GM12878 (cell line): ENCODE measurements at regions of chr19 and their contacts with region 1.

Region 1: GRCh38 chr19:18179957-18180356 is 6.3 kb downstream of the IFI30 start:
- DNase-seq: no peak
- ATAC-seq: peak; percentile 6; the same call in 2 of the 3 replicates
- H3K4me3 ChIP-seq: no peak overlapping the region
- H3K27ac ChIP-seq: no peak overlapping the region
- H3K4me1 ChIP-seq: peaks cover 14% of the 10 kb centered on the region
- H3K27me3 ChIP-seq: no peaks in the 10 kb centered on the region
- CTCF ChIP-seq: no peak
- EP300 ChIP-seq: no peak
- POLR2A ChIP-seq: no peak
- RAD21 ChIP-seq: no peak

Region 2: GRCh38 chr19:18041054-18041453 is 138.9 kb before region 1 on chr19:
- CTCF ChIA-PET with region 1: no interaction called
- POLR2A ChIA-PET with region 1: no interaction called
- RAD21 ChIA-PET with region 1: no interaction called
- SMC1A ChIA-PET with region 1: no interaction called
- in situ Hi-C with region 1: no loop called
- intact Hi-C with region 1: no loop called
- DNase-seq: no peak
- ATAC-seq: no peak
- H3K4me3 ChIP-seq: no peak overlapping the region
- H3K27ac ChIP-seq: no peak overlapping the region
- H3K4me1 ChIP-seq: peaks cover 15% of the 10 kb centered on the region
- H3K27me3 ChIP-seq: peaks cover 0 to 3% of the 10 kb centered on the region in 2 experiments; a peak in 2 of 4 replicates
- CTCF ChIP-seq: no peak
- EP300 ChIP-seq: no peak
- POLR2A ChIP-seq: no peak
- RAD21 ChIP-seq: no peak

Region 3: DNA sequence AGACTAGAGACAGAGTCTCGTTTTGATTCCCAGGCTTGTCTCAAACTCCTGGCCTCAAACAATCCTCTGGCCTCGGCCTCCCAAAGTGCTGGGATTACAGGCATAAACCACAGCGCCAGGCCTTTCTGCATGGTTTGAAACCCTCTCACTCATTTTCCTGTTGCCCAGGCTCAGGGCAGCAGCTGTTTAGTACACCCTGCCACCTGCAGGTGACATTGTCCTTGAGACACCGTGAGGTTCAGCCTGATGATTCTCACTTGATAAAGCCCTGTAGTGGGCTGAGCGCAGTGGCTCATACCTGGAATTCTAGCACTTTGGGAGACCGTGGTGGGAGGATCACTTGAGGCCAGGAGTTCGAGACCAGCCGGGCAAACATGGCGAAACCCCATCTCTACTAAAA is 105.8 kb before region 1 on chr19:
- CTCF ChIA-PET with region 1: no interaction called
- POLR2A ChIA-PET with region 1: no interaction called
- RAD21 ChIA-PET with region 1: no interaction called
- SMC1A ChIA-PET with region 1: no interaction called
- in situ Hi-C with region 1: no loop called
- intact Hi-C with region 1: no loop called
- DNase-seq: no peak
- ATAC-seq: no peak
- H3K4me3 ChIP-seq: no peak overlapping the region
- H3K27ac ChIP-seq: no peak overlapping the region
- H3K4me1 ChIP-seq: no peaks in the 10 kb centered on the region
- H3K27me3 ChIP-seq: no peaks in the 10 kb centered on the region
- CTCF ChIP-seq: no peak; a peak in 2 of 6 replicates
- EP300 ChIP-seq: no peak
- POLR2A ChIP-seq: no peak
- RAD21 ChIP-seq: no peak

Region 4: GRCh38 chr19:18192673-18193387 is 12.9 kb after region 1 on chr19 and contains the start of gene MPV17L2:
- CTCF ChIA-PET with region 1: interaction called, 22 read pairs
- POLR2A ChIA-PET with region 1: interaction called, 31 read pairs
- RAD21 ChIA-PET with region 1: interaction called, 22 read pairs
- SMC1A ChIA-PET with region 1: interaction called, 21 read pairs
- in situ Hi-C with region 1: no loop called
- intact Hi-C with region 1: no loop called
- DNase-seq: peak; percentile 100
- ATAC-seq: peak; percentile 94
- H3K4me3 ChIP-seq: peak within 1 kb of the TSS; percentile 79
- H3K27ac ChIP-seq: peak within 1 kb of the TSS; percentile 65
- H3K4me1 ChIP-seq: peaks cover 11% of the 10 kb centered on the region
- H3K27me3 ChIP-seq: no peaks in the 10 kb centered on the region
- CTCF ChIP-seq: no peak
- EP300 ChIP-seq: 0 out of 4 replicates have a peak, but pooled peaks of 1 of the 2 experiments have one; percentile 8
- POLR2A ChIP-seq: peak; percentile 72
- RAD21 ChIP-seq: no peak
- polyA plus RNA-seq, gene MPV17L2: 5.1 to 7.7 TPM